H1 (cell line): ENCODE measurements at regions of chr10 and their contacts with region 1.

Region 1: DNA sequence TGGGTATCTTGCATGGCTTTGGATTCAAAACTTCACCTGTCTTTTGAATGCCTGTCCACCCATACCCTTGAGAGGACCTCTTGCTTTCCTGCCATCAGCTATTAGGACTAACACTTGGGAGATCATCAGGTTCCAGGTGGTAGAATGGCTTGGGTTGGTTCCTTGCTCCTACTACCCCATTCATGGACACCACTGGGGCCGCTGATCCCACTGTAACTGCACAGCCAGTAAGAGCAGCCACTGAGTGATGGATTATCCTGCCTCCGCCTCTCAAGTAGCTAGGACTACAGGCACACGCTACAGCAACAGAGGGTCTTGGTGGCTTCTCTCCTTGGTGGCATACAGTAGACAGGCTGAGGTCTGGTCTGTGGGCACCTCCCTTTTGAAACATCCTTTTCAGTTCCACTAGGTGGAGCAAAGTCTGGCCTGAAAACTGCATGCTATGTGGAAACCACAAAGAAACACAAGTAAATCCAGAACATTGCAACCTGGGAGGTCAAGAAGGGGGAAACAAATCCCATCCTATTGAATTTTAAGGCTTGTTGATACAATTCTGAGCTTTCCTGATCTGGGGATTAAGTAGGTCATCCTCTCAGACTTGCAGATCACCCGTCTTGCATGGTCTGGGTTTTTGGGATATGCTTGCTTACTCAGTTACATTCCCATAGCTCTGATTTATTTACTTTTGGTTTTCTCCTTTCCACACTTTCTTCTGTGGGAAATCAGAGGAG is 9.4 kb downstream of the WBP1L start:
- DNase-seq: no peak
- H3K4me3 ChIP-seq: no peak overlapping the region
- H3K27ac ChIP-seq: no peak overlapping the region
- H3K4me1 ChIP-seq: no peaks in the 10 kb centered on the region
- H3K27me3 ChIP-seq: no peaks in the 10 kb centered on the region
- CTCF ChIP-seq: peak; percentile 15 to 77 (median 50)
- EP300 ChIP-seq: no peak
- POLR2A ChIP-seq: no peak
- RAD21 ChIP-seq: peak; percentile 59 to 75

Region 2: GRCh38 chr10:102682416-102682815 is 70.7 kb before region 1 on chr10:
- CTCF ChIA-PET with region 1: no interaction called
- POLR2A ChIA-PET with region 1: no interaction called
- DNase-seq: no peak
- H3K4me3 ChIP-seq: no peak overlapping the region
- H3K27ac ChIP-seq: no peak overlapping the region
- H3K4me1 ChIP-seq: peaks cover 8 to 17% (median 12%) of the 10 kb centered on the region in 4 experiments
- H3K27me3 ChIP-seq: no peaks in the 10 kb centered on the region
- CTCF ChIP-seq: 0 out of 4 replicates have a peak, but pooled peaks of 1 of the 3 experiments have one; percentile 6
- EP300 ChIP-seq: no peak
- POLR2A ChIP-seq: no peak
- RAD21 ChIP-seq: no peak

Region 3: DNA sequence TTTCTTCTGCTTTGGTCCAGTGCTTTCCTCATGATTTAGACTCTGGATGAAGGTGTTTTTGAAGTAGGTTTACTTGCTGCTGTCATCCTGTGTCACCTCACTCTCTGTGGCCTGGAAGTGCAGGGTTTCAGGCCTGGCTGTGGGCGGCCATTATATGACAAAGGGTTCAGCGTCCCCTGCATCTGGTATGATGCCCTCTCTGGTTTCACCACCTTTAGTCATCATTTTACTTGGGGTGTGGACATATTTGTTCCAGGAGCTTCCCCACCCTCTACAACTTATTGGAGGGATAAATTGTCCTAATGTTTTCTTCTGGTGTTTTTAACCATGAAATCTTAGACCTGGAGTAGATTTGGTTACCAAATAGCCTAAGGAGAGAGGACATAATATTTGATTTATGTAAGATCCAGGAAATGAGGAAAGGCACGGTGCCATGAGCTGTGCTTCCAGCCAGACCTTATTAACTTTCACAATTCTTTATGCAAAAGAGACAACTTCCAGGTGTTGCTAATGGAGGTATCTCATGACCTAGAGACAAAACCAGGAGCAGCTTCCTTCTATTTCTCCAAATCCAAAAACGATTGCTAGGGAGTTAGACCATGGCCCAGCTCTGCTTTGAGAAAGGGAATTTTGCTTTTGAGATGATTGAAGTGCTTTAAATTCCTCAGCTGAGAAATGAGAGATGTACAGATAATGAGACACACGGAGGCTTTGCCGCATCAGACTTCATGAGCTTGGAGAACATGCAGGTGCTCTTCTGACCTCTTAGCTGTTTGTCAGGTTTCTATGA is 11.5 kb after region 1 on chr10:
- CTCF ChIA-PET with region 1: interaction called, 42 read pairs
- POLR2A ChIA-PET with region 1: no interaction called
- DNase-seq: no peak
- H3K4me3 ChIP-seq: no peak overlapping the region
- H3K27ac ChIP-seq: no peak overlapping the region
- H3K4me1 ChIP-seq: no peaks in the 10 kb centered on the region
- H3K27me3 ChIP-seq: no peaks in the 10 kb centered on the region
- CTCF ChIP-seq: no peak
- EP300 ChIP-seq: no peak
- POLR2A ChIP-seq: no peak
- RAD21 ChIP-seq: no peak

Region 4: GRCh38 chr10:102802920-102803534 is 49.9 kb after region 1 on chr10:
- CTCF ChIA-PET with region 1: interaction called, 11 read pairs
- POLR2A ChIA-PET with region 1: interaction called, 5 read pairs
- DNase-seq: peak in 1 of 2 experiments; percentile 61
- H3K4me3 ChIP-seq: no peak overlapping the region
- H3K27ac ChIP-seq: peak overlapping the region; percentile 55
- H3K4me1 ChIP-seq: peaks cover 19 to 33% (median 29%) of the 10 kb centered on the region in 4 experiments
- H3K27me3 ChIP-seq: no peaks in the 10 kb centered on the region
- CTCF ChIP-seq: no peak
- EP300 ChIP-seq: no peak
- POLR2A ChIP-seq: no peak
- RAD21 ChIP-seq: no peak

Region 5: DNA sequence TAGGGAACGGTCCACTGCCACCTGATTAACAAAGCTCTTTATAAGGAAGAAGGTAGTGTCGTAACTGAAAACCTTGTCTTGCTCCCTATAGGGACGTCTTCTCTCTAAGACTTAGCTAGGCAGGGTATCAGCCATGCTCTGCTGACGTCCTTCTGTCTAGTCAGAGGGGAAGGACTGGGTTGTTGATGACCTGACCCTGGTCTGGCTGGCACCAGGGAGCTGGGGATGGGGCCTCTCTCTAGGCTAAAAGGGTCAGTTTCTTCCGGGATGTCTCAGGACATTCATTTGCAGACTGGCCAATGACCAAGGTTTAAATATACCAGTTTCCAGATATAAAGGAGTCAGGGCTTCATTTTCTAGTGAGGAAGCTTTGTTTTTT is 74.5 kb after region 1 on chr10:
- CTCF ChIA-PET with region 1: interaction called, 12 read pairs
- POLR2A ChIA-PET with region 1: no interaction called
- DNase-seq: no peak
- H3K4me3 ChIP-seq: no peak overlapping the region
- H3K27ac ChIP-seq: no peak overlapping the region
- H3K4me1 ChIP-seq: no peaks in the 10 kb centered on the region
- H3K27me3 ChIP-seq: no peaks in the 10 kb centered on the region
- CTCF ChIP-seq: no peak
- EP300 ChIP-seq: no peak
- POLR2A ChIP-seq: no peak
- RAD21 ChIP-seq: no peak

Region 6: GRCh38 chr10:102888048-102888447 is 134.9 kb after region 1 on chr10:
- CTCF ChIA-PET with region 1: no interaction called
- POLR2A ChIA-PET with region 1: no interaction called
- DNase-seq: no peak
- H3K4me3 ChIP-seq: no peak overlapping the region
- H3K27ac ChIP-seq: no peak overlapping the region
- H3K4me1 ChIP-seq: no peaks in the 10 kb centered on the region
- H3K27me3 ChIP-seq: no peaks in the 10 kb centered on the region
- CTCF ChIP-seq: no peak
- EP300 ChIP-seq: no peak
- POLR2A ChIP-seq: no peak
- RAD21 ChIP-seq: no peak

Region 7: GRCh38 chr10:102904346-102904745 is 151.2 kb after region 1 on chr10:
- CTCF ChIA-PET with region 1: interaction called, 16 read pairs
- POLR2A ChIA-PET with region 1: no interaction called
- DNase-seq: no peak
- H3K4me3 ChIP-seq: no peak overlapping the region
- H3K27ac ChIP-seq: no peak overlapping the region
- H3K4me1 ChIP-seq: no peaks in the 10 kb centered on the region
- H3K27me3 ChIP-seq: no peaks in the 10 kb centered on the region
- CTCF ChIP-seq: no peak
- EP300 ChIP-seq: no peak
- POLR2A ChIP-seq: no peak
- RAD21 ChIP-seq: no peak